Mammary epithelial cell (primary cell): ENCODE measurements at regions of chr2 and their contacts with region 1.

Region 1: DNA sequence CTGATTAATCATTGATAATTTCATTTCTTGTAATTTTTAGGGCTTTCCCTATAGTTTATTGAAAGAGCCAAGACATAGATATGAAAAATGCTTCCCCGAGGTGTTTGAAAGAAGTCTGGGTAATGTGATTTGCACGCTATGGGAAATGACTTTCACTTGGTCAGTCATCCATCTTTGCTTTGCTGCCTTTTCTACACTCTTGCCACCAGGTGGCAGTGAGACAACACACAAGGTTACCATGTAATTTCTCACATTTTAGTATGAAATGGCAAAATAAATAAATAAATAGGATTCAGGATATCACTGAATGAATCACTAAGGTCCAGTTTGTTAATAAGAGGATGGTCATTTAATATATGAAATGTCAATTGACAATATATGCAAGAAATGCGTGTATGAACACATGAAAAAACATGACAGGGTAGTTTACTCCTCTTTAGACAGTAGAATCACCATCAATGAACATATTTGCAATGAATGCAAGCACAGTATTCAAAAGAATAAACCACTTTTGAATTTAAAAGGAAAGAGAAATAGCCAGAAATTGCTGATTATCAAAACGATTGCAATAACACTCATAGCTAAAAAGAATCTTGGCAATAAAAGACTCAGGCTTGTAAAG is 52.2 kb upstream of the KCNH7 start:
- DNase-seq: peak; percentile 57
- H3K4me3 ChIP-seq: peak overlapping the region in 1 of 3 experiments; percentile 25
- H3K27ac ChIP-seq: no peak overlapping the region
- H3K4me1 ChIP-seq: no peaks in the 10 kb centered on the region
- H3K27me3 ChIP-seq: no peaks in the 10 kb centered on the region
- CTCF ChIP-seq: peak; percentile 87 to 91

Region 2: DNA sequence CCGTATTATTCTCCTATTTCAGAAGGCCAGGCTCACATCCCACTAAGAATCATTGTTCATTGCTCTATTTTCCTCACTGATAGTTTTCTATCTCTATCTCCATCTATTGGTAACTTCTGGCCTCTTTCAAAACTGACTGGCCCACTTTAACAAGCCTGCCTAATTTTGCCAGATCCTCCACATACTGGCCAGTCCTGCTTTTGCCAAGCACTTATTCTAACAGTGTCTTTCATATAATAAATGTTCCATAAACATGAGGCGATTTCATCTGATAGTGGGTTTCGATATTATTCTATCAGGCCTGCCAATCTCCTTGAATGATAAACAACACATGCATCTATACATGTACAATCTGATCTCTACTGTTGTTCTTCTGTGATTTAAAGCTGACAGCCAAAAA is 73.7 kb after region 1 on chr2:
- CTCF ChIA-PET with region 1: no interaction called
- dilution Hi-C with region 1: no loop called
- in situ Hi-C with region 1: no loop called
- intact Hi-C with region 1: loop called (anchors 1 kb)
- DNase-seq: no peak
- H3K4me3 ChIP-seq: no peak overlapping the region
- H3K27ac ChIP-seq: no peak overlapping the region
- H3K4me1 ChIP-seq: no peaks in the 10 kb centered on the region
- H3K27me3 ChIP-seq: peaks cover 2% of the 10 kb centered on the region
- CTCF ChIP-seq: peak in 1 of 2 donors; percentile 22